ENCODE measurements at regions of chr4 and their contacts with region 1.

Region 1: DNA sequence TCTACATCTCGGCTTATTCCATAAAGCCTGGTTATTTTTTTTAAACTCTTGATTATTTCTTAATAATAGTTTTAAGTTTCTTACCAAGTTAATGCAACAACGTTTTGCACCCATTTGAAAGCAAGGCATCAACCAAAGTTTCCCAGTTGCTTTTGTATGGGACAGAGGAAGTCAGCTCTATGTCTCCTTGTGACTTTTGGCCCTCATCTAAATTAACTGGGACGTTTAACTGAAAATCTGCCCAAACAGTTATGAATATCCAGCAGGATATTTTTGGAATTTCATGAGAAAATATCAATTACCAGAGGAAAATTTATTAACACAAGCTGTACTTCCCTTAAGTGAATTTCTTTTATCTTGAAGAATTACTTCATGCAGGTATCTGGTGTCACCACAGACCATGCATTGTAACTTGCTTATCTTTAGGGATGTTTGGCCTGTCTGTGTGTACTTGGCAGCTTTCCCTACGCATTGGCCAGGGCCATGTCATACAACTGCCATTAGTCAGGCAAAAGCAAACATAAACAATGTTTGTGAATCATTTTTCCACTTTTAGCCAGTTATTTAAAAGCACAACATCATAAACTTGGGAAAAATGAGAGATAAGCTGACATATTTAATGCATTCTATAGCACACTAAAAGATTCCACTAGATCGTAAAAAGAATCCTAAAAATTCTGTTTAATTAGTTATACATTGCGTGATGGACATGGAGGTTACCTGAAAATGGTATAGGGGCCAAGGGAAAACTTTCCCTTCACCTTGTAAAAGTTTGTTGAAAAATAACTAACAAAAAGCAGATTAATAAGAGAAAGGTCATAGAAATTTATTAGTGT is 101.4 kb upstream of the PDE5A start:
- DNase-seq: peak; percentile 94
- ATAC-seq: peak; percentile 82
- H3K4me3 ChIP-seq: peak overlapping the region; percentile 40; the same call in 1 of the 2 replicates
- H3K27ac ChIP-seq: peak overlapping the region; percentile 86
- H3K4me1 ChIP-seq: peaks cover 54% of the 10 kb centered on the region
- H3K27me3 ChIP-seq: no peaks in the 10 kb centered on the region
- CTCF ChIP-seq: no peak

Region 2: DNA sequence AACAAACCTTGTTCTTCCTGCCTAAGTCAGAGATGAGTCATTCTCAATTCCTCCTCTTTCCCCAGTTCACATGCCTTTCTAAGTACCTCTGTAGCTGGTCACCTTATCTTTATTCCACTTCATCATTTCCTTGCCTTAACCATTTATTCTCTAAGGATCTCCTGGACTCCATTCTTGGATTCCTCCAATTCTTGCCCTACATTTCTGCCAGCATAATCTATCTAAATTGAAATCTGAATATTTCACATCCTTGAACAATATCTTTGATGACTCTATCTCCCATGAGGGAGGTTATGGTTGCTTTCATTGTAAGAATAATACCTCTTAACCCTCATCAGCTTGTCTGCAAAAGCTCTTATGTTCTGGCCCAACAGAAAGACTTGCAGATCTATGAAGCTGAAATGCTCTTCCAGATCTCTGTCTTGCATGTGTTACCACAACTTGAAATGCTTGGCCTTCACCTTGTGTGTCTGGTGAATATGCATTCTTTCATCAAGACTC is 72.9 kb before region 1 on chr4:
- CTCF ChIA-PET with region 1: no interaction called
- POLR2A ChIA-PET with region 1: no interaction called
- intact Hi-C with region 1: loop called (anchors 2 kb)
- DNase-seq: peak; percentile 65
- ATAC-seq: peak; percentile 76
- H3K4me3 ChIP-seq: no peak overlapping the region
- H3K27ac ChIP-seq: peak overlapping the region; percentile 38
- H3K4me1 ChIP-seq: peaks cover 39% of the 10 kb centered on the region
- H3K27me3 ChIP-seq: no peaks in the 10 kb centered on the region
- CTCF ChIP-seq: no peak

Region 3: GRCh38 chr4:119683518-119683917 is 46.5 kb before region 1 on chr4:
- CTCF ChIA-PET with region 1: no interaction called
- POLR2A ChIA-PET with region 1: no interaction called
- intact Hi-C with region 1: loop called (anchors 2 kb)
- DNase-seq: peak; percentile 73
- ATAC-seq: peak; percentile 84
- H3K4me3 ChIP-seq: no peak overlapping the region
- H3K27ac ChIP-seq: no peak overlapping the region
- H3K4me1 ChIP-seq: peaks cover 40% of the 10 kb centered on the region
- H3K27me3 ChIP-seq: no peaks in the 10 kb centered on the region
- CTCF ChIP-seq: no peak

Region 4: GRCh38 chr4:120049732-120050494 is 319.9 kb after region 1 on chr4:
- CTCF ChIA-PET with region 1: no interaction called
- POLR2A ChIA-PET with region 1: no interaction called
- intact Hi-C with region 1: loop called (anchors 2 kb)
- DNase-seq: peak; percentile 80
- ATAC-seq: peak; percentile 98
- H3K4me3 ChIP-seq: peak overlapping the region; percentile 23; the same call in 1 of the 2 replicates
- H3K27ac ChIP-seq: no peak overlapping the region
- H3K4me1 ChIP-seq: no peaks in the 10 kb centered on the region
- H3K27me3 ChIP-seq: no peaks in the 10 kb centered on the region
- CTCF ChIP-seq: peak; percentile 78

Measured in PC-3 (cell line).